ENCODE measurements at regions of chr14 and their contacts with region 1.

Region 1: DNA sequence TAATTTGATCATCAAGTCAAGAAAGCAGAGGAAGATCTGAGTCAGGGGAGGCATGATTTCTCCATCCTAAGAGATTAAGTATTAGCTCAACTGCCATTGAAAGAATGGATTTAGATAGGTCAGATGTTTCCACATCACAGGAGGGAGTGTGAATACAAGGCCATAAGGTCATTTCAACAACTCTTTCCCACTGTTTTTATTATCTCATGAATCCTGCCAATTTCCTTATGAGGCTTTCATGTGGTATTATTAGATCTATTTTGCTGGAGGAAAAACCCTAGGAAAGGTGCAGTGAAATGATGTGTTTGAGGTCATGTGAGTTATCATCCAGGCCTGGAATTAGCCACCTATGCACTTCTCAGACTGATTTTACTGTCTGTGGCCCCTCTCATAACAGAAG is 269.0 kb downstream of the NOVA1 start:
- DNase-seq: no peak
- H3K4me3 ChIP-seq: no peak overlapping the region
- H3K4me3 Mint-ChIP-seq: no peak overlapping the region
- H3K27ac Mint-ChIP-seq: no peak overlapping the region
- H3K4me1 ChIP-seq: peaks cover 5% of the 10 kb centered on the region; the same call in 1 of the 2 replicates
- H3K4me1 Mint-ChIP-seq: peaks cover 7% of the 10 kb centered on the region
- H3K27me3 ChIP-seq: no peaks in the 10 kb centered on the region
- H3K27me3 Mint-ChIP-seq: no peaks in the 10 kb centered on the region
- CTCF ChIP-seq: no peak

Region 2: DNA sequence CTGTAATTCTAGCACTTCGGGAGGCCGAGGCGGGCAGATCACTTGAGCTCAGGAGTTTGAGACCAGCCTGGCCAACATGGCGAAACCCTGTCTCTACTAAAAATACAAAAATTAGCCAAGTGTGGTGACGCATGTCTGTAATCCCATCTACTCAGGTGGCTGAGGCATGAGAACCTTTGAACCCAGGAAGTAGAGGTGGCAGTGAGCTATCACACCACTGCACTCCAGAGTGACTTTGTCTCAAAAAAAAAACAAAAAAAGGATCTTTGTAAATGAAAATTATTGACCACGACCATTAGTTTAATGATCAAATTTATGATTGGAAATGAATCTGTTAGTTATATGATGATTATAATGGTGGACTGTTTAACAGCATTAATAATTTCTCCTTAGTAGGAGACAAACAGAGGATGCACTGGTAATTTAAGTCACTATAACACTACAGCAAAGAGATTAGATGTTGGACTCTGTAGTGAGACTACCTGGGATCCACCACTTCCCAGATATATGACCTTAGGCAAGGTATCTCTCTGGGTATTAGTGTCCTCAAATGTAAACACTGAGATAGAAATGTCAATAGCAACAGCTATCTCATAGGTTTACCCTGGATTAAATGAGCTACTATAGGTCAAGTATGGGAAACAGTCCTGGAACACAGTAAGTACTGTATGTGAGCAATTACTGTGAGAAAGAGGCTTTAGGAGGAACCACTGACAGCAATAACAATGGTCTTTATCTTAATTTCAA is 54.3 kb after region 1 on chr14:
- CTCF ChIA-PET with region 1: no interaction called
- POLR2A ChIA-PET with region 1: no interaction called
- intact Hi-C with region 1: loop called (anchors 5 kb)
- DNase-seq: no peak
- H3K4me3 ChIP-seq: no peak overlapping the region
- H3K4me3 Mint-ChIP-seq: no peak overlapping the region
- H3K27ac Mint-ChIP-seq: no peak overlapping the region
- H3K4me1 ChIP-seq: peaks cover 54% of the 10 kb centered on the region
- H3K4me1 Mint-ChIP-seq: peaks cover 28% of the 10 kb centered on the region
- H3K27me3 ChIP-seq: no peaks in the 10 kb centered on the region
- H3K27me3 Mint-ChIP-seq: no peaks in the 10 kb centered on the region
- CTCF ChIP-seq: no peak

Measured in Caco-2 (cell line).